SK-N-SH (cell line): ENCODE measurements at regions of chr6 and their contacts with region 1.

Region 1: DNA sequence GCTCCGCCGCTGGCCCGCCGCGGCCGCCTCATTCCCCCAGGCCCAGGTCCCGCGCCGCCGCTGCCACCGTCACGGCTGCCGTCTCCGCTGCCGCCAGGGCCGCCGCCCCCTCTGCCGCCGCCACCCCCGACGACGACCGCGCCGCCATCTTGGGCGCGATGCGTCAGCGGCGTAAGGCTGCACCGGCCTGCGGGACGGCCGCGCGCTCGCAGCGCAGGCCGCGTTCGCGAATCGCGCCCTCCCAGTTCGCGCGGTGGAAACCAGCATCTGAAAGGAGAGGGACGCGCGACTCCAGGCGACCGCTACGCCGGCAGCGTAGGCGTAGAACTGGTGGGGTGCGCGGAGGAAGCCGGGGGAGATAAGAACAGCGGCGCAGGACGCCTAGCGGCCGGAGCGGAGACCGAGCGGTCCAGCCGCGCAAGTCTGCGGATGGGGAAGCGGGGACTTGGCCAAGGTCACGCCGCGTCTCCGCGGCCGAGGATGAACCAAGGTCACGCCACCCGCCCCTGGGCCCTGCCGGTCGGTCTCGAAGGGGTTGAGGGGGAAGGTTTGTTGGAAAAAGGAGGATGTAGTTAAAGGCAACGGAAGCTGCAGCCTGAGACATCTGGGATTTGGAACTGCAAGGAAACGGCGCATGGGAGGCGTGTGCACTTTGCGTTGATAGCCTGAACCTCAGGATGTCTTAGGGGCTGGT is at the start of gene NUDT3:
- DNase-seq: peak; percentile 96
- H3K4me3 ChIP-seq: peak within 1 kb of the TSS; percentile 76 to 92
- H3K27ac ChIP-seq: peak within 1 kb of the TSS; percentile 62 to 87
- H3K4me1 ChIP-seq: peaks cover 3 to 11% of the 10 kb centered on the region in 2 experiments; a peak in 2 of 4 replicates
- H3K27me3 ChIP-seq: no peaks in the 10 kb centered on the region
- CTCF ChIP-seq: peak; percentile 78
- EP300 ChIP-seq: no peak; a peak in 1 of 4 replicates
- RAD21 ChIP-seq: peak; percentile 66
- polyA plus RNA-seq, gene NUDT3: 11.9 and 14.4 TPM in 2 replicates

Region 2: DNA sequence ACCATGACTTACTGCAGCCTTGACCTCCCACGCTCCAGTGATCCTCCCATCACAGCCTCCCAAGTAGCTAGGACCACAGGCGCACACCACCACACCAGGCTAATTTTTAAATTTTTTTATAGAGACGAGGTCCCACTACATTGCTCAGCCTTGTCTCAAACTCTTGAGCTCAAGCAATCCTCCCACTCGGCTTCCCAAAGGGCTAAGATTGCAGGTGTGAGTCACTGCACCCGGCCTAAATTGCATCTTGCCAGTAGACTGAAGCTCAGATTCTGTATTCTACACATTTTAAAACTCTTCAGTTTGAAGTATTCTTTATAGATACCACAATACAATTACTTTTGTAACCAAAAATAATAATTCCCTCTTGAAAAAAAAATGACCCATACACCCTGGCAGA is 11.6 kb before region 1 on chr6:
- CTCF ChIA-PET with region 1: interaction called, 16 read pairs
- POLR2A ChIA-PET with region 1: interaction called, 3 read pairs
- DNase-seq: no peak
- H3K4me3 ChIP-seq: no peak overlapping the region
- H3K27ac ChIP-seq: no peak overlapping the region
- H3K4me1 ChIP-seq: no peaks in the 10 kb centered on the region; a peak in 2 of 4 replicates
- H3K27me3 ChIP-seq: no peaks in the 10 kb centered on the region
- CTCF ChIP-seq: no peak
- EP300 ChIP-seq: no peak
- RAD21 ChIP-seq: no peak